CD4-positive, alpha-beta memory T cell (primary cell): ENCODE measurements at regions of chr1 and their contacts with region 1.

Region 1: DNA sequence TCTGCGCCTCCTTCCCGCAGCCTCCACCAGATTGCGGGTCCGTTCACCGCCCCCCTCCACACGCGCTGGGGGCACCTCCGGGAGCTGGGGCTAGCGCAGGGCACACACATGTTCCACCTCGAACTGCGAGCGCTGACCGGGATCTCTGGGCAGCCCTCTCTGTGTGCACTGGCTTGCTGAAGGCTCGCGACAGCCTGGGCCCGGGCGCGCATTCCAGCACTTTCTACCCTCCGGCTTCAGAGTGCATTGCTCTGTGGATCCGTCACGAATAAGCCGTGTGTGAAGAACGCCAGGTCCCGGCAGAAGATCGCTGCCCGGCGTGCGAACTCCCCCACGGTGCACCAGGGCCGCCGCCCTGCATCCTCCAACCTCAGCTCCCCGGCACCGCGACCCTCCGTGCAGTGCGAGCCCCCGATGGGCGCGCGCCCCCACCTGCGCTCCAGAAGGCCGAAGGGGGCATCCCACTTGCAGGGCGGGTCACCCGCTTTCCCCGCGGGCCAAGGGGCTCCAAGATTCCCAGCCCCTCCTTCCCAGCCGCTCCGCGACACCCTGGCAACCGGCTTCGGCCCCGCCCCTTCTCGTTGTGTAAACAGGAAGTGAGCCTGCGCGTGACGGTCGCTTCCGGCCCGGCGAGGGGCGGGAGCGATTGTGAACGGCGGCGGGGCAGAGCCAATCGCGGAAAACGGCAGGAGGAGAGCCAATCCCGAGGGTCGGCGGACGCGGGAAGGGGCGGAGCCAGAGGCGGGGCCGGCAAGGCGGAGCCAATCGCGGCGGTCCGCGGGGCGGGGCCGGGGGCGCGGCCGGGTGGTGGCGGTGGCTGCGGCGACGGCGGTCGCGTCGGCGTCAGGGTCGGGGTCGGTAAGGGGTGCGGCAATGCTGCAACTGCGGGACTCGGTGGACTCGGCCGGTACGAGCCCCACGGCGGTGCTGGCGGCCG is at the start of gene TPRG1L:
- DNase-seq: peak; percentile 97 to 99 (median 99)
- H3K4me3 ChIP-seq: peak within 1 kb of the TSS; percentile 36 to 90
- H3K4me3 Mint-ChIP-seq: peak within 1 kb of the TSS; percentile 92 to 99 (median 94)
- H3K27ac ChIP-seq: peak within 1 kb of the TSS; percentile 66
- H3K27ac Mint-ChIP-seq: peak within 1 kb of the TSS; percentile 92 to 98 (median 97)
- H3K4me1 ChIP-seq: peaks cover 33% of the 10 kb centered on the region
- H3K4me1 Mint-ChIP-seq: peaks cover 25 to 52% (median 41%) of the 10 kb centered on the region in 4 donors
- H3K27me3 ChIP-seq: no peaks in the 10 kb centered on the region
- H3K27me3 Mint-ChIP-seq: no peaks in the 10 kb centered on the region
- total RNA-seq, gene TPRG1L: 57.9 to 59.5 TPM

Region 2: DNA sequence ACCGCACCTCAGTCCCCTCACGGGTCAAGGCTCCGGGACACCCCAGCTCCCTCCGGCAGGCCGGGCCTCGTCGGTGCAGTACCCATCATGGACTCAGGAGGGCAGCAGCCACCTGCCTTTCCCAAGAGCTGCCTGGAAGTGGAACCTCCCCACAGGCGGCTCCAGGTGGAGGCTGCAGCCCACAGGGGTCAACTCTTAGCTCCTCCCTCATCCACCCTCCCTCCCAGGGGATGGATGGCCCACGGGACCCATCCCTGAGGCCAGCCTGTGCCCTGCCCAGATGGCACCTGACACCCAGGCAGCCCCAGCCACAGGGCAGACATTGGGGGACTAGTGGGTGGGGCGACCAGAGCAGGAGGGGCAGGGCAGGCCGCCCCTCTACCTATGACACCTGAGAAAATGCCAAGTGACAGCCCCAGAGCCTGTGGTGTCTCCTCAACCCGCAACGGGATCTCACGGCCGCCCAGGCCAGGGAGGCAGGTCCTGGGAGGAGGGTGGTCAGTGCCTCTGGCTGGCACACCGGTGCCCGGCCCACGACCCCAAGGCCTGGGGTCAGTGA is 171.2 kb before region 1 on chr1:
- CTCF ChIA-PET with region 1: interaction called, 60 read pairs
- POLR2A ChIA-PET with region 1: interaction called, 5 read pairs
- intact Hi-C with region 1: loop called (anchors 1 kb)
- DNase-seq: peak; percentile 57 to 75 (median 64)
- H3K4me3 ChIP-seq: no peak overlapping the region
- H3K4me3 Mint-ChIP-seq: peak overlapping the region; percentile 46 to 82 (median 66)
- H3K27ac ChIP-seq: no peak overlapping the region
- H3K27ac Mint-ChIP-seq: peak overlapping the region in 1 of 7 donors; percentile 43
- H3K4me1 ChIP-seq: peaks cover 13% of the 10 kb centered on the region
- H3K4me1 Mint-ChIP-seq: peaks cover 0 to 7% (median 2%) of the 10 kb centered on the region in 4 donors
- H3K27me3 ChIP-seq: peaks cover 11% of the 10 kb centered on the region
- H3K27me3 Mint-ChIP-seq: peaks cover 7 to 8% of the 10 kb centered on the region in 2 donors

Region 3: GRCh38 chr1:3491291-3492246 is 132.9 kb before region 1 on chr1:
- CTCF ChIA-PET with region 1: interaction called, 24 read pairs
- POLR2A ChIA-PET with region 1: interaction called, 4 read pairs
- intact Hi-C with region 1: loop called (anchors 1 kb)
- DNase-seq: peak; percentile 76 to 83 (median 78)
- H3K4me3 ChIP-seq: no peak overlapping the region
- H3K4me3 Mint-ChIP-seq: peak overlapping the region in 5 of 8 donors; percentile 9 to 70 (median 52)
- H3K27ac ChIP-seq: no peak overlapping the region
- H3K27ac Mint-ChIP-seq: peak overlapping the region in 4 of 7 donors; percentile 4 to 50 (median 30)
- H3K4me1 ChIP-seq: no peaks in the 10 kb centered on the region
- H3K4me1 Mint-ChIP-seq: peaks cover 3 to 8% (median 6%) of the 10 kb centered on the region in 4 donors
- H3K27me3 ChIP-seq: no peaks in the 10 kb centered on the region
- H3K27me3 Mint-ChIP-seq: no peaks in the 10 kb centered on the region

Region 4: GRCh38 chr1:3530926-3531818 is 93.3 kb before region 1 on chr1:
- CTCF ChIA-PET with region 1: interaction called, 10 read pairs
- POLR2A ChIA-PET with region 1: interaction called, 13 read pairs
- intact Hi-C with region 1: loop called (anchors 1 kb)
- DNase-seq: peak; percentile 77 to 84 (median 81)
- H3K4me3 ChIP-seq: peak overlapping the region; percentile 54 to 85
- H3K4me3 Mint-ChIP-seq: peak overlapping the region; percentile 82 to 94 (median 88)
- H3K27ac ChIP-seq: peak overlapping the region; percentile 54
- H3K27ac Mint-ChIP-seq: peak overlapping the region; percentile 54 to 99 (median 97)
- H3K4me1 ChIP-seq: peaks cover 16% of the 10 kb centered on the region
- H3K4me1 Mint-ChIP-seq: peaks cover 4 to 36% (median 18%) of the 10 kb centered on the region in 4 donors
- H3K27me3 ChIP-seq: no peaks in the 10 kb centered on the region
- H3K27me3 Mint-ChIP-seq: no peaks in the 10 kb centered on the region

Region 5: GRCh38 chr1:3649342-3650247 is 25.1 kb after region 1 on chr1 and contains the start of gene WRAP73:
- CTCF ChIA-PET with region 1: interaction called, 3 read pairs
- POLR2A ChIA-PET with region 1: interaction called, 3 read pairs
- intact Hi-C with region 1: loop called (anchors 1 kb)
- DNase-seq: peak; percentile 85 to 88 (median 87)
- H3K4me3 ChIP-seq: peak within 1 kb of the TSS; percentile 5 to 66
- H3K4me3 Mint-ChIP-seq: peak within 1 kb of the TSS; percentile 81 to 96 (median 86)
- H3K27ac ChIP-seq: peak within 1 kb of the TSS; percentile 54
- H3K27ac Mint-ChIP-seq: peak within 1 kb of the TSS; percentile 26 to 88 (median 68)
- H3K4me1 ChIP-seq: peaks cover 41% of the 10 kb centered on the region
- H3K4me1 Mint-ChIP-seq: peaks cover 12 to 41% (median 28%) of the 10 kb centered on the region in 4 donors
- H3K27me3 ChIP-seq: peaks cover 11% of the 10 kb centered on the region
- H3K27me3 Mint-ChIP-seq: peaks cover 18 to 19% of the 10 kb centered on the region in 2 donors
- total RNA-seq, gene WRAP73: 39.0 to 40.7 TPM

Region 6: DNA sequence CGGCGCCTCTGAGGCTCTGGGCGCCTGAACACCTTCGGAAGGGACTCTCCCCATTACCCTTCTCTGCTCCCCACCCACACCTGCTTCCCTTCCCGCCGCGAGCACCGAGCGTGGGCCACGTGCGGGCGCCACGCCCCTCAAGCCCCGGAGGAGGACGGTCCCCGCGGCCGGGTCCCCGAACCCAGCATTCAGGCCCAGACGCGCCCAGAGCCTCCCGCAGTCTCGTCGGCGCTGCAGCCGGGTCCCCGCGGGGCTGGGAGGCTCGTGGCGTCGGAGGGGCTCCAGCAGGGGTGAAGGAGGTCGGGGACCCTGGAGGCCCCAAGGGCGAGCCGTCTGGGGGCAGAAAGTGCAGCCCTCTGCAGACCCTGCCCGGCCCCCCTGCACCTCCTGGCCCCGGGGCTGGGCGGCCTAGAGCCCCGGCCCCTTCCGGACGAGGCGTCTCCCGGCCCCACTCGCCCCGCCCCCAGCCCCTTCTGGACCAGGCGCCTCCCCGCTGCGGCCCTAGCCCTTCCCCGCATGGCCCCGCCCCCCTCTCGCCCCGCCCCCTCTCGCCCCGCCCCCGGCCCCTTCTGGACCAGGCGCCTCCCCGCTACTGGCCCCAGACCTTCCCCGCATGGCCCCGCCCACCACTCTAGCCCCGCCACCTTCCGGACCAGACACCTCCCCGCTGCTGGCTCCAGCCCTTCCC is 147.7 kb after region 1 on chr1:
- CTCF ChIA-PET with region 1: no interaction called
- POLR2A ChIA-PET with region 1: no interaction called
- intact Hi-C with region 1: loop called (anchors 1 kb)
- DNase-seq: peak; percentile 82 to 92 (median 83)
- H3K4me3 ChIP-seq: peak overlapping the region; percentile 14 to 60
- H3K4me3 Mint-ChIP-seq: peak overlapping the region; percentile 56 to 81 (median 68)
- H3K27ac ChIP-seq: no peak overlapping the region
- H3K27ac Mint-ChIP-seq: peak overlapping the region in 2 of 7 donors; percentile 25 to 72
- H3K4me1 ChIP-seq: peaks cover 28% of the 10 kb centered on the region
- H3K4me1 Mint-ChIP-seq: peaks cover 4 to 28% (median 11%) of the 10 kb centered on the region in 4 donors
- H3K27me3 ChIP-seq: no peaks in the 10 kb centered on the region
- H3K27me3 Mint-ChIP-seq: peaks cover 0 to 6% of the 10 kb centered on the region in 2 donors

Region 7: GRCh38 chr1:3856908-3857790 is 232.7 kb after region 1 on chr1 and contains the starts of genes CEP104 and DFFB:
- CTCF ChIA-PET with region 1: no interaction called
- POLR2A ChIA-PET with region 1: no interaction called
- intact Hi-C with region 1: loop called (anchors 2 kb)
- DNase-seq: peak; percentile 99
- H3K4me3 ChIP-seq: peak within 1 kb of the TSS; percentile 88 to 96
- H3K4me3 Mint-ChIP-seq: peak within 1 kb of the TSS; percentile 95 to 99 (median 98)
- H3K27ac ChIP-seq: peak within 1 kb of the TSS; percentile 71
- H3K27ac Mint-ChIP-seq: peak within 1 kb of the TSS; percentile 88 to 98 (median 96)
- H3K4me1 ChIP-seq: peaks cover 35% of the 10 kb centered on the region
- H3K4me1 Mint-ChIP-seq: peaks cover 18 to 56% (median 35%) of the 10 kb centered on the region in 4 donors
- H3K27me3 ChIP-seq: no peaks in the 10 kb centered on the region
- H3K27me3 Mint-ChIP-seq: no peaks in the 10 kb centered on the region
- total RNA-seq, gene CEP104: 64.0 to 64.4 TPM
- total RNA-seq, gene DFFB: 23.2 to 26.1 TPM